CD8-positive, alpha-beta T cell (primary cell): ENCODE measurements at regions of chr9 and their contacts with region 1.

Region 1: DNA sequence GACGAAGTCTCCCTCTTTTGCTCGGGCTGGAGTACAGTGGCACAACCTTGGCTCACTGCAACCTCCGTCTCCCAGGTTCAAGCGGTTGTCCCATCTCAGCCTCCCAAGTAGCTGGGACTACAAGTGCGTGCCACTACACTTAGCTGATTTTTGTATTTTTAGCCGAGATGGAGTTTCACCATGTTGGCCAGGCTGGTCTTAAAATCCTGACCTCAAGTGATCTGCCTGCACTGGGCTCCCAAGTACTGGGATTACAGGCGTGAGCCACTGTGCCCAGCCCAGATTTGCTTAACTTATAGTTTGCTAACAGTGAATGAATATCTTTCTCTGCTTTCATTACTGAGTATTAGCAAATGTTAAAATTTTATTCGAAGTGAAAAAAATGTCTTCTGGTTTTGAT is 84.3 kb downstream of the VPS13A start:
- DNase-seq: no peak
- ATAC-seq: no peak
- H3K4me3 ChIP-seq: no peak overlapping the region
- H3K4me3 Mint-ChIP-seq: no peak overlapping the region
- H3K27ac ChIP-seq: no peak overlapping the region
- H3K27ac Mint-ChIP-seq: no peak overlapping the region
- H3K4me1 ChIP-seq: no peaks in the 10 kb centered on the region
- H3K4me1 Mint-ChIP-seq: no peaks in the 10 kb centered on the region
- H3K27me3 ChIP-seq: no peaks in the 10 kb centered on the region
- H3K27me3 Mint-ChIP-seq: no peaks in the 10 kb centered on the region
- CTCF ChIP-seq: no peak

Region 2: DNA sequence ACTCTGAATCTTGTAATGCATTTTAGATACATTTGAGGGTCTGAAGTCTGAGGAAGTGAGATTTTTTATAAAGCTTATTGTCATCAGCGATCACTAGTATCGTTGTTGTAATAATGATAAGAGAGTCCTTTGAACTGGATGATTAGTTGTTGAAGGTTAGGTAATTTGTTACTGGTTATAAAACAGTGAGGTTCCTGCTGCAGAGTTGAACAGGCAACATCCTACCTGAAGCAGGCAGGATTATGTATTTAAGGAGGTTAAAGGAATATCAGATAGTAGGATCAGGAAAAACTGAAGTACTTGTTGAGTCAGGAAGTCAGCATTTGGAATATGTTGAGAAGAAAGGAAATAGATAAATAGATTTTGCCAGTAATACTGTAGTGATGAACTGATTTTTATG is 22.4 kb after region 1 on chr9:
- CTCF ChIA-PET with region 1: no interaction called
- POLR2A ChIA-PET with region 1: no interaction called
- intact Hi-C with region 1: loop called in 1 of 2 experiments (anchors 2 kb)
- DNase-seq: no peak
- ATAC-seq: no peak
- H3K4me3 ChIP-seq: no peak overlapping the region
- H3K4me3 Mint-ChIP-seq: no peak overlapping the region
- H3K27ac ChIP-seq: no peak overlapping the region
- H3K27ac Mint-ChIP-seq: no peak overlapping the region
- H3K4me1 ChIP-seq: no peaks in the 10 kb centered on the region
- H3K4me1 Mint-ChIP-seq: no peaks in the 10 kb centered on the region
- H3K27me3 ChIP-seq: no peaks in the 10 kb centered on the region
- H3K27me3 Mint-ChIP-seq: no peaks in the 10 kb centered on the region
- CTCF ChIP-seq: no peak

Region 3: DNA sequence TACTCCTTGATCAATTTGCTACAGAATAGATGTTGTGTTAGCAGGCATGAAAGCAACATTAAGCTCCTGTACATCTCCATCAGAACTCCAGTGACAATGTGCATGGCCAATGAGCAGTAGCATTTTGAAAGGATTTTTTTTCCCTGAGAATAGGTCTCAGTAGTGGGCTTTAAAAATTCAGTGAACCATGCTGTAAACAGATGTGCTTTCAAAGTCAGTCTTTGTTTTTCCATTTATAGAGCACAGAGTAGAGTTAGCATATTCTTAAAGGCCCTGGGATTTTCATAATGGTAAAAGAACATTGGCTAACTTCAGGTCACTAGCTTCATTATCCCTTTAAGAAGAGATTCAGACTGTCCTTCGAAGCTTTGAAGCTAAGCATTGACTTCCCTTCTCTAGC is 66.5 kb after region 1 on chr9:
- CTCF ChIA-PET with region 1: no interaction called
- POLR2A ChIA-PET with region 1: no interaction called
- intact Hi-C with region 1: no loop called
- DNase-seq: no peak
- ATAC-seq: no peak
- H3K4me3 ChIP-seq: no peak overlapping the region
- H3K4me3 Mint-ChIP-seq: no peak overlapping the region
- H3K27ac ChIP-seq: no peak overlapping the region
- H3K27ac Mint-ChIP-seq: no peak overlapping the region
- H3K4me1 ChIP-seq: no peaks in the 10 kb centered on the region
- H3K4me1 Mint-ChIP-seq: no peaks in the 10 kb centered on the region
- H3K27me3 ChIP-seq: no peaks in the 10 kb centered on the region
- H3K27me3 Mint-ChIP-seq: no peaks in the 10 kb centered on the region
- CTCF ChIP-seq: no peak

Region 4: DNA sequence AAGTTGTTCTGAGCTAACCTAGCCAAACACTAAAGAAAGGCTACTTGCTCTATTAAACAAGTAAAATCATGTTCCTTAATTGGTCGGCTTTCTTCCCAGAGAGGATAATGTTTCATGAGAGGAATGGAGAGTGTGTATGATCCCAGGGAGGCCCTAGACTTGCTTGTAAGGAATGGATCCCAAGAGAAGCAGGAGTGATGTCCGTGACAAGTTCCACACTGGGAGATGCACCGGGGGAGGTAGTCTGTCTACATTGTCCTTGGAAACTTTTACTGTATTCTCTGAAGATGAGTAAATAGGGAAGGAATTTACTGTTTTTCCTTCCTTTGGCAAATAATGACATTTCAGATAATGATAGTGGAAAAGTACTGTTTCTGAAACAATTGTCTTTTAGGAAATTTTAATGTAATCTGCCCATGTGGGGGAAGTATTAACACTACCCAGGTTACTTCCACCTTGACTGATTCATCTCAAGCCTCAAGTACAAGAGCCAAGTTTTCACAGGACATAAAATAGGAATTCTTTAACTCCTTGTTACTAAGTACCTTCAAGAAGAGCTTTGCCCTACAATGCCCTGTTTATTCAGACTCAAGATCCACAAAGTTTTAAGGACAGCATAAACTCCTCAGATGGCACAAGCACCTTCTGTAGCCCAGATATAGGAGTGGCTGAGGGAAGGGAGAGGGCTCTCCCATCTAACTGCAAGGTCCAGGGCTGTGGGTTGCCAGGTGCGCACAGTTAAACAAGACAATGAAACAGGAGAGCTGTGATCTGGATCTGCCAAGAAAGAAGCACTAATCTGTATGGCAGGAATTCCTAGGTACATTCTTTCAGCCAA is 234.4 kb after region 1 on chr9:
- CTCF ChIA-PET with region 1: no interaction called
- POLR2A ChIA-PET with region 1: no interaction called
- intact Hi-C with region 1: no loop called
- DNase-seq: no peak
- ATAC-seq: no peak
- H3K4me3 ChIP-seq: no peak overlapping the region
- H3K4me3 Mint-ChIP-seq: no peak overlapping the region
- H3K27ac ChIP-seq: no peak overlapping the region
- H3K27ac Mint-ChIP-seq: no peak overlapping the region
- H3K4me1 ChIP-seq: no peaks in the 10 kb centered on the region
- H3K4me1 Mint-ChIP-seq: no peaks in the 10 kb centered on the region
- H3K27me3 ChIP-seq: no peaks in the 10 kb centered on the region
- H3K27me3 Mint-ChIP-seq: no peaks in the 10 kb centered on the region
- CTCF ChIP-seq: no peak